Activated CD8-positive, alpha-beta T cell treated with anti-CD3 and anti-CD28 coated beads, Interleukin-2, amount 10 ng/mL, durations not matched to agents 7 days and 5 days (primary cell): ENCODE measurements at regions of chr12 and their contacts with region 1.

Region 1: GRCh38 chr12:107131832-107132616 is 38.7 kb upstream of the CRY1 start:
- DNase-seq: peak; percentile 33
- ATAC-seq: no peak
- H3K4me3 Mint-ChIP-seq: no peak overlapping the region
- H3K27ac Mint-ChIP-seq: no peak overlapping the region
- H3K4me1 Mint-ChIP-seq: peaks cover 6% of the 10 kb centered on the region
- H3K27me3 Mint-ChIP-seq: peaks cover 3% of the 10 kb centered on the region

Region 2: DNA sequence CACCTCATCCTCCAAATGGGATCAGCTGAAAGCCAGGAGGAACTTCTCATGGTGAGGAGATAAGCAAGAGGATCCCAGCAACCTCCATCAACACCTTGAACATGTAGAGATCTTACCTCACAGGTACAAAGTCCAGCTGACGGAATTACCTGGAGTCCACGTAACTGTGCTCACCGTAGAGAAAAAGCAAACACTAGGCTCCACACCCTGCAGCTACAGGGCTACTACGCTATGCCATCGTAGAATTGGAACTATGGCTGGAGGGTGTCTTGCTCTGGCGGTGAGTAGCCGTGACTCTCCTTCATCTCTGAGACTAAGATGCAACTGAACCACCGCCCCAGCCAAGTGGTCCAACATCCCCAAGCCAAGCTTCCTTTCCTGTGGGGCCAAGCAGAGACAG is 89.2 kb before region 1 on chr12:
- CTCF ChIA-PET with region 1: no interaction called
- POLR2A ChIA-PET with region 1: no interaction called
- DNase-seq: no peak
- ATAC-seq: no peak
- H3K4me3 Mint-ChIP-seq: no peak overlapping the region
- H3K27ac Mint-ChIP-seq: no peak overlapping the region
- H3K4me1 Mint-ChIP-seq: peaks cover 2% of the 10 kb centered on the region
- H3K27me3 Mint-ChIP-seq: no peaks in the 10 kb centered on the region

Region 3: DNA sequence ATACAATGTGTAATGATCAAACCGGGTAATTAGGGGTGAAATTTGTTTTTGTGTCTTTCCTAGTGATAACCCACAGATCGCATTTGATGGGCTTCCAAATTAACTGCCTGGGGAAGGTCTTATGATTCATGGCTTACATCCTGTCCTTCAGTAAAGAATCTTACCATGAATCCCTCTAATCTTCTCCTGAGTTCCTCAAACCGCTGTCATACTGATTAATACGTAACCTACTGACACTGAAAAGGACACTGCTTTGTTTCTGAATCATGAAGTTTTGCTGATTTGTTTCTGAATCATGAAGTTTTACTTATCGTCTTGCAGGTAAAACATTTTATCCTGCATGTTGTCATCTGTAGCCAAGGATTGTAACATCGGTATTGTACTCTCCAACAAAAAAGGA is 13.4 kb after region 1 on chr12:
- CTCF ChIA-PET with region 1: interaction called, 33 read pairs
- POLR2A ChIA-PET with region 1: no interaction called
- DNase-seq: no peak
- ATAC-seq: no peak
- H3K4me3 Mint-ChIP-seq: no peak overlapping the region
- H3K27ac Mint-ChIP-seq: no peak overlapping the region
- H3K4me1 Mint-ChIP-seq: no peaks in the 10 kb centered on the region
- H3K27me3 Mint-ChIP-seq: peaks cover 8% of the 10 kb centered on the region

Region 4: GRCh38 chr12:107309020-107309419 is 177.0 kb after region 1 on chr12:
- CTCF ChIA-PET with region 1: interaction called, 14 read pairs
- POLR2A ChIA-PET with region 1: no interaction called
- DNase-seq: peak; percentile 71
- ATAC-seq: peak; percentile 89
- H3K4me3 Mint-ChIP-seq: peak overlapping the region; percentile 12
- H3K27ac Mint-ChIP-seq: peak overlapping the region; percentile 81
- H3K4me1 Mint-ChIP-seq: peaks cover 26% of the 10 kb centered on the region
- H3K27me3 Mint-ChIP-seq: peaks cover 43% of the 10 kb centered on the region

Region 5: DNA sequence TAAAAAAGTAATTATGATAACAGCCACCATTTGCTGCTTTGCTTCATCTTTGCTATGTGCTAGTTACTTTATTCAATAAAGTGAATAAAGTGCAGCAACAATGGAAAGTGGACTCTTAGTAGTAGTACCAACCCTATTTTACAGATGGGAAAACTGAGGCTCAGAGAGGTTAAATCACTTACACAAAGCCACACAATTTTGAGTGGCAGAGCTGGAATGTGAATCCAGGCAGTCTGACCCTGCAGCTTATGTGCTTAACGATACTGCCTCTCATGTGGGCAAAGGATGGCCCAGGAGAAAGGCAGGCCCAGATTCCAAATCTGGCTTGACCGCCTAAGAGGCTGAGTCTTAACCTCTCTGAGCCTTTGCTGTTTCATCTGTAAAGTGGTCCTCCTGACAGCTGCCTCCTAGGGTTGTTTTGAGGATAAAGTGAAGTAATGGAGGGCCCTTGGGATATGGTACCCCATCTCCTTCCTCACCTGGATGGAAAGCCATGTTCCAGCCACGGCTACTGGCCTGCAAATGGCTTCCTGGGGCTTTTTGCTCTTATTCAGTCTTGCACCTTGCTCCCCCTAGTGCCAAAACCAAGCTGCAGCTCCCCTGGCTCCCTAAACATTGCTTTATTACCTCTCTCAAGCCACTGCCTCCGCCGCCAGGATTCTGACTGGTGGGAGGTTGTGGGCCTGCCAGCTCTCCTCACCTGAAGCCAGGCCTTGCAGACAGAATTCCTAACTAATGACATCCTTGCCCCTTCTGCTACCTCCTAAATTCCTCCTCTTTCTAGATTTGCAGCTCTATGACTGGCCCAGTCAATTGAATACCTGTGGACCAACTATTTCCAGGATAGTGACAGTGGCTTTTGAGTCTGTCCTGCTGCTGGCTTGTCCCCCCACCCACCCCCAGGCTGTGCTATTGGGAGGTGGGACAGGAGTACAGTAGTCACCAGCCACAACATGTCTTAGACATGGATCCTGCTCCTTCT is 270.3 kb after region 1 on chr12:
- CTCF ChIA-PET with region 1: interaction called, 143 read pairs
- POLR2A ChIA-PET with region 1: interaction called, 4 read pairs
- DNase-seq: peak; percentile 79
- ATAC-seq: peak; percentile 71
- H3K4me3 Mint-ChIP-seq: no peak overlapping the region
- H3K27ac Mint-ChIP-seq: peak overlapping the region; percentile 39
- H3K4me1 Mint-ChIP-seq: peaks cover 55% of the 10 kb centered on the region
- H3K27me3 Mint-ChIP-seq: no peaks in the 10 kb centered on the region

Region 6: GRCh38 chr12:107607464-107608392 is 475.7 kb after region 1 on chr12:
- CTCF ChIA-PET with region 1: interaction called, 243 read pairs
- POLR2A ChIA-PET with region 1: interaction called, 3 read pairs
- DNase-seq: peak; percentile 84
- ATAC-seq: peak; percentile 76
- H3K4me3 Mint-ChIP-seq: no peak overlapping the region
- H3K27ac Mint-ChIP-seq: no peak overlapping the region
- H3K4me1 Mint-ChIP-seq: no peaks in the 10 kb centered on the region
- H3K27me3 Mint-ChIP-seq: no peaks in the 10 kb centered on the region